H1 (cell line): ENCODE measurements at regions of chr2 and their contacts with region 1.

Region 1: DNA sequence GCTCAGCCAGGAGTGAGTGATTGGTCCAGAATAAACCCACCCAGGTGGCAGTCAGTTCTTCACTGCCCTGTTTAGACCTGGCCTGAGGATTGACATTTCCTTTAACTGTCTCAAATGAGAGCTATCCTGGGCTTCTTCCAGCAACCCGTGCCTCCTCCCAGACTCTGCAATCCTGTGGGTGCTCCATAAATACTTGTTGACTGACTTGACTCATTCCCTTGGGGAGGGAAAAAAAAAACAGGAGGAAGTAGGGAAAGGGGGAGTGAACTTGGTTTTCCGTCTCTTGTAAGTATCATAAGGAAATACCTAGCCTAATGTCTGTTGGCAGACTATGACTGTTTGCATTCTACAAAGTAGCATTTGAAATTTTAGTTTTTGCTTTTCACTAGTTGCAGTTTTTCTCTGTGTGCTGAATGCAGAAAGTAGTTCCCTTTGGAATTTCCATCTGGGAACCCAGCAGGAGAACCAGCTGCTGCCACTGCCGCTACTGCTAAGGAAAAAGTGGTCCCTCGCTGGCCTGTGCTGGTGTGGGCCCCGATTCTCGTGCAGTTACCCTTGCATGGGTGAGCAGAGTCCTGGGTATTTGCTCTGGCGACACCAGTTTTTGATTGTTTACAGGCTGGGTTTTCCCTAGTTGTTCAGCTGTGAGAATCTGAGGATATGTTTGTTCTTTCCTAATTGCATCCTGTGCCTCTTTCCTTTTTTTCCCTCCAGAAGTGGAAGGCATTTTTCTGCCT is 78.8 kb downstream of the TGOLN2 start:
- DNase-seq: no peak
- H3K4me3 ChIP-seq: no peak overlapping the region
- H3K27ac ChIP-seq: peak overlapping the region; percentile 48; the same call in 1 of the 2 replicates
- H3K4me1 ChIP-seq: peaks cover 20 to 63% (median 58%) of the 10 kb centered on the region in 4 experiments
- H3K27me3 ChIP-seq: no peaks in the 10 kb centered on the region
- CTCF ChIP-seq: no peak
- EP300 ChIP-seq: no peak
- POLR2A ChIP-seq: no peak
- RAD21 ChIP-seq: no peak

Region 2: GRCh38 chr2:85237865-85238521 is 10.9 kb before region 1 on chr2:
- CTCF ChIA-PET with region 1: interaction called, 55 read pairs
- POLR2A ChIA-PET with region 1: interaction called, 60 read pairs
- DNase-seq: peak; percentile 44 to 88
- H3K4me3 ChIP-seq: peak overlapping the region in 3 of 4 experiments; percentile 21 to 46 (median 27); a peak in 5 of 8 replicates
- H3K27ac ChIP-seq: peak overlapping the region; percentile 86
- H3K4me1 ChIP-seq: peaks cover 30 to 55% (median 38%) of the 10 kb centered on the region in 4 experiments
- H3K27me3 ChIP-seq: no peaks in the 10 kb centered on the region
- CTCF ChIP-seq: no peak
- EP300 ChIP-seq: no peak
- POLR2A ChIP-seq: peak in 1 of 2 experiments; percentile 78
- RAD21 ChIP-seq: peak; percentile 8 to 12; a peak in 1 of 4 replicates

Region 3: DNA sequence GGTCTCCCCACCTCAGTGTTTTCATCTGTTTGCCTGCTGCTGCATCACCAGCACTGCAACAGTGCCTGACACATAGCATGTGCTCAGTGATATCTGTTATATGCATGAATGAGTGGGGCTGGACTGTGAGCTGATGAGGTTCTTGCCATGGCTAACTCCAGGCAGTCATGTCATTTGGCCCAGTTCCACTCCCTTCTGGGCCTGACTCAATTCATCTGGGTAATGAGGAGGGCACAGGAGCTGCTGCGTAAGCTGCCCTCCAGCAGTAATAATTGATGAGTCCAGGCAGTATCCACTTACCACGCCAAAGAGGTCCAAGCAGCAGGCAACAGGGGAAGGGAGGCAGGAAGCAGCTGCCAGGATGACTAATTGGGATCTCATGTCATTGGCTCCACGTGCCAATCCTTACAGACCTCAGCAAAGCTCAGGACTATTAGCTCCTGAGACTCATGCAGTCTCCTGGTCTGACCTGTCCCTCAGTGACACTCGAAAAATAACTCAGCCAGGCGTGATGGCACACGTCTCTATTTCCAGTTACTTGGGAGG is 255.9 kb after region 1 on chr2:
- CTCF ChIA-PET with region 1: no interaction called
- POLR2A ChIA-PET with region 1: no interaction called
- DNase-seq: no peak
- H3K4me3 ChIP-seq: no peak overlapping the region
- H3K27ac ChIP-seq: no peak overlapping the region
- H3K4me1 ChIP-seq: no peaks in the 10 kb centered on the region; a peak in 2 of 7 replicates
- H3K27me3 ChIP-seq: no peaks in the 10 kb centered on the region
- CTCF ChIP-seq: no peak
- EP300 ChIP-seq: no peak
- POLR2A ChIP-seq: no peak
- RAD21 ChIP-seq: no peak